Tibial artery (tissue), 4 donors: ENCODE measurements at regions of chr4 and their contacts with region 1.

Region 1: GRCh38 chr4:151362404-151363164 is 37.2 kb upstream of the SH3D19 start:
- DNase-seq: peak; percentile 79 to 86
- H3K4me3 ChIP-seq: no peak overlapping the region
- H3K27ac ChIP-seq: no peak overlapping the region
- H3K4me1 ChIP-seq: no peaks in the 10 kb centered on the region
- H3K27me3 ChIP-seq: no peaks in the 10 kb centered on the region
- CTCF ChIP-seq: peak; percentile 91 to 98

Region 2: DNA sequence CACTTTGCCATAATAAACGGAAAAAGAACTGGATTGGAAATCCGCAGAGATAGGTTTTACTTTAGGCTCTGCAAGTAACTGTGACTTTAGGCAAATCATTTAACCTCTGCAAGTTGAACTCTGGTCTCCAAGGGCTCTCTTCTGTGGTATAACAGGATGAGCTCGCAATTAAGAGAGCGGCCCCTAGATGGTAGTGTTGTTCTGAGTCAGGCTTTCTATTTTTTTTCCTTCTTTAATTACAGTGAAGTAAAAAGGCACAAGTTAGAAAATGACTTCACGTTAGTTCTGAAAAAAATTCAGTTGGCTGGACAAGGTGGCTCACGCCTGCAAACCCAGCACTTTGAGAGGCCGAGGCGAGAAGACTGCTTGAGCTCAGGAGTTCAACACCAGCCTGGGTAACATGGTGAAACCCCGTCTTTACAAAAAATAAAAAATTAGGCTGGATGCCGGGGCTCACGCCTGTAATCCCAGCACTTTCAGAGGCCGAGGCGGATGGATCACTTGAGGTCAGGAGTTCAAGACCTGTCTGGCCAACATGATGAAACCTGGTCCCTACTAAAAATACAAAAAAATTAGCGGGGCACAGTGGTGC is 245.1 kb before region 1 on chr4:
- intact Hi-C with region 1: loop called (anchors 5 kb)
- DNase-seq: peak in 1 of 2 donors; percentile 60
- H3K4me3 ChIP-seq: no peak overlapping the region
- H3K27ac ChIP-seq: peak overlapping the region in 1 of 2 donors; percentile 11
- H3K4me1 ChIP-seq: peaks cover 0 to 4% (median 0%) of the 10 kb centered on the region in 4 donors
- H3K27me3 ChIP-seq: no peaks in the 10 kb centered on the region
- CTCF ChIP-seq: peak; percentile 65 to 67

Region 3: GRCh38 chr4:151276787-151277562 is 85.6 kb before region 1 on chr4 and contains the start of gene PRSS48:
- intact Hi-C with region 1: loop called (anchors 2 kb)
- DNase-seq: peak; percentile 38 to 73
- H3K4me3 ChIP-seq: no peak within 1 kb of the TSS
- H3K27ac ChIP-seq: no peak within 1 kb of the TSS
- H3K4me1 ChIP-seq: peaks cover 0 to 9% (median 3%) of the 10 kb centered on the region in 4 donors
- H3K27me3 ChIP-seq: no peaks in the 10 kb centered on the region
- CTCF ChIP-seq: peak; percentile 56

Region 4: DNA sequence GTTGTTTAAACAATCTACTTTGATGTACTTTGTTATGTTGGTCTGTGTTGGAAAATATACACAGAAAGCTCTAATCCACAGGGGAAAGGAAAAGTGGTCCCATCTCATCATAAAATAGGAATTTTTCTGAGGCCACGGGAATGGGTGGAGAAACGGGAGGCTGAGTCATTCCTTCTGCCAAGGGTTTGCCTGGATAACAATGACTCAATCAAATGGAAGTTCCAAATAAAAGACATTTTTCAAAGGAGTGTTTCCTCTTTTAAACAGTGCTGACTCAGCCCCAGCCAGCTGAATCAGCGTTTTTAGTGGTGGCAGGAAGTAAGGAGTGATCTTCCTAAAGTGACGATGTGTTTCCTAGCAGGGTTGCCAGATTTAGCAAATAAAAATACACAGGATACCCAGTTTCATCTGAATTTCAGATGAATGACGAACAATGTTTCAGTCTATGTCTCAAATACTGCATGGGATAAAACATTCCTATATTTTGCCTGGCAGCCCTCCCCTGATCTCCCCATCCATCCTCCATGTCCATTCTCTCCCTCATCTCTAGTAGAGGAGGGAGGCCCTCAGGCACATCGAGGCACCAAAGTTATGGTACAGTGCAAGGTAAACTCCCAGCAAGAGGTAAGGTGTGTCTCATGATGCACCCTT is 743.7 kb after region 1 on chr4:
- intact Hi-C with region 1: no loop called
- DNase-seq: peak; percentile 81 to 84
- H3K4me3 ChIP-seq: no peak overlapping the region
- H3K27ac ChIP-seq: no peak overlapping the region
- H3K4me1 ChIP-seq: peaks cover 0 to 12% (median 2%) of the 10 kb centered on the region in 4 donors
- H3K27me3 ChIP-seq: no peaks in the 10 kb centered on the region
- CTCF ChIP-seq: no peak